ENCODE measurements at regions of chrX and their contacts with region 1.

Region 1: DNA sequence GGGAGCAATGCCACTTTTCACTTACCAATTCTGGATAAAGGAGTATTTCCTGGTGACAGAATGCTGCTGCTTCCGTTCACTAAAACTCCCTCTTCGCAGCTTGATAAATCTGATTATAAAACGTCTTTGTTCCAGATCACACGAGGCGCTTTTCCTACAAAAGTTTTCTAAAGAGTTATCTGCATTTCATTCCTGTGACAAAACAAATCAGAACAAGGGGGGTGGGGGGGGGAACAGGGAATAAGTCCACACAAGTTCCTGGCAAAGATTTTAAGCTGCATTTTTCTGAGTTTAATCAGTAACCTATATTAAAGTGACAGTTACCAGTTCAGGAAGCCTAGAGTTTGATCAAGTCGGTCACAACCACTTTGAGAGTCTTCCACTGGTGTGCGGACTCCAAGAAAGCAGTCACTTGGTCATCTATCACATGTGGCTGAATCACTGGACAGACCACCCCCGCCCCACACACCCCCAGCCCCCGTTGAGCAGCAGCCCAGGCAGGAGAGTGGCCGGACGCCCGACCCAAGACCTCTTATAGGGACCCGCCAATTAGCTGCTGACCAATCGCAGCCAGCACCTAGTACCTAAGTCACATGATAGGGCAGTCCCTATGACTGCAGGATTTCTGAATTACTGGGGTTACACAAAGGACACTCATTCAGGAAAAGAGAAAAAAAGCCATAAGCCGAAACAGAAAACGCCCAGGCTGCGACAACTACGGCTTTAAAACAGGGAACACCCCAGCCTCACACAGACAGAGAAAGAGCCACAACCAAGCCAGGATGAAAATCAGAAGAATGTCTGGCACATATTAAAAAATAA is 569.3 kb upstream of the DIPK2B start:
- DNase-seq: peak; percentile 57 to 85 (median 81)
- H3K4me3 ChIP-seq: peak overlapping the region in 6 of 7 experiments; percentile 62 to 87 (median 79)
- H3K27ac ChIP-seq: peak overlapping the region; percentile 61 to 86
- H3K4me1 ChIP-seq: peaks cover 31 to 59% (median 38%) of the 10 kb centered on the region in 4 experiments
- H3K27me3 ChIP-seq: no peaks in the 10 kb centered on the region

Region 2: DNA sequence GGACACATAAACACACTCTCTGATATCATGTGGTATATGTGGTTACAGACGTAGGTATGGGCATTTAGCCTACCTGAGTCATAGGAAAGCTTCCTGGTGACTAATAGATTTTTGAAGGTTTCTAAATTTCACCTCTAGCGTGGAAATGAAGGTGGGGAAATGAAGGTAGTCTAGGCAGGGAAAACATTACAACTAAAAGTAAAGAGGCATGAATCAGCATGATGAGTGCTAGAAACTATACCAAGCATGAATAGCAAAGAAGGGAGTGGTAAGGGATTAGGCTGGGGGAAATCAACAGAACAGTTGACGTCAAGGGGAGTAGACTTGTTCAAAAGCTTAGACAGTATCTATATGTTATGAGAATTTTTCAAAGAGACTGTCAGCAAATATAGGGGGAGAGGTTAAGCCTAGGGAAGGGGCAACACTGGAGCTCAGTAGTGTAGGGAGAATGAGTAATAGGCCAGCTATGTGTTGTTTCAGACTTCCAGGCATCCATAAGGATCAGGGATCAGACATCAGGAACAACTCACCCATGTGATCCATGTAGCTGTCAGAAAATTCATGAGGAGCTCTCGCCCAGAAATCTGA is 290.0 kb before region 1 on chrX:
- CTCF ChIA-PET with region 1: no interaction called
- POLR2A ChIA-PET with region 1: no interaction called
- DNase-seq: no peak
- H3K4me3 ChIP-seq: no peak overlapping the region
- H3K27ac ChIP-seq: no peak overlapping the region
- H3K4me1 ChIP-seq: no peaks in the 10 kb centered on the region
- H3K27me3 ChIP-seq: peaks cover 0 to 3% (median 0%) of the 10 kb centered on the region in 5 experiments

Region 3: DNA sequence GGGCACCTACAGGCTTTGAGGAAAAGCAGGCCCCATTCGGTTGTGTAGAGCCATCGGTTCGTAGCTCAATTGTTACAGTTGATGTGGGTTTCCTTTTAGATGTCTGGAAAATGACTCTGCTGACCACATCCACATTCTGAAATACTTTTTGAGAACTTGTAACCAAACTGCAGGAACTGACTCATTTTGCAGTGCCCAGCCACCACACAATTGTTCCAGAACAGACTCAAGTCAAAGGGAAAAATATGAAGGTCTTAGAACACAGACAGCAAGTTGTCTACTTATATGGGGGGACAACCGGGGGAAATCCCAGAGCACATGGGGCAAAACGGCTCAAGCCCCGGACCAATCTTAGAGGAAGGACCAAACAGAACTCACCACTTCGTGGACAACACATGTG is 11.7 kb before region 1 on chrX:
- CTCF ChIA-PET with region 1: interaction called, 6 read pairs
- POLR2A ChIA-PET with region 1: interaction called, 13 read pairs
- DNase-seq: peak; percentile 62 to 95 (median 93)
- H3K4me3 ChIP-seq: peak overlapping the region in 6 of 7 experiments; percentile 36 to 60 (median 40)
- H3K27ac ChIP-seq: peak overlapping the region; percentile 64 to 83
- H3K4me1 ChIP-seq: peaks cover 53 to 92% (median 88%) of the 10 kb centered on the region in 4 experiments
- H3K27me3 ChIP-seq: no peaks in the 10 kb centered on the region

Region 4: DNA sequence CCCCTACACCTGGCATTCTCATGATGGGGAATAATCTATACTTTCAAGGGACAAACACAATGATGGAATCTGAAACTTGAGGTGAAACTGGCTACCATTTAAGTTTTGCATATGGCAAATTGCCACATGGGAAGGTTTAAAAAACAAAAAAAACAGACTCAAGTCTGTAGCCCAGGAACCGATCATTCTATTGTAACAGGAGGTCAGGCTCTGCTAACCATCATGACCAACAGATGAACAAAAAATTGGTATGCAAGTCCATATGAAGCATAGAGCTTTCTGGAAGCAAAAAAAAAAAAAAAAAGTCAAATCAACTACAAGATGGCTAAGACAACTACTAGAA is 25.0 kb after region 1 on chrX:
- CTCF ChIA-PET with region 1: no interaction called
- POLR2A ChIA-PET with region 1: no interaction called
- DNase-seq: no peak
- H3K4me3 ChIP-seq: no peak overlapping the region
- H3K27ac ChIP-seq: no peak overlapping the region
- H3K4me1 ChIP-seq: peaks cover 0 to 18% (median 2%) of the 10 kb centered on the region in 4 experiments
- H3K27me3 ChIP-seq: peaks cover 0 to 12% (median 0%) of the 10 kb centered on the region in 5 experiments

Measured in common myeloid progenitor, CD34-positive (primary cell).